Activated CD8-positive, alpha-beta T cell treated with anti-CD3 and anti-CD28 coated beads, Interleukin-2, amount 10 ng/mL, durations not matched to agents 7 days and 5 days (primary cell): ENCODE measurements at regions of chr4 and their contacts with region 1.

Region 1: DNA sequence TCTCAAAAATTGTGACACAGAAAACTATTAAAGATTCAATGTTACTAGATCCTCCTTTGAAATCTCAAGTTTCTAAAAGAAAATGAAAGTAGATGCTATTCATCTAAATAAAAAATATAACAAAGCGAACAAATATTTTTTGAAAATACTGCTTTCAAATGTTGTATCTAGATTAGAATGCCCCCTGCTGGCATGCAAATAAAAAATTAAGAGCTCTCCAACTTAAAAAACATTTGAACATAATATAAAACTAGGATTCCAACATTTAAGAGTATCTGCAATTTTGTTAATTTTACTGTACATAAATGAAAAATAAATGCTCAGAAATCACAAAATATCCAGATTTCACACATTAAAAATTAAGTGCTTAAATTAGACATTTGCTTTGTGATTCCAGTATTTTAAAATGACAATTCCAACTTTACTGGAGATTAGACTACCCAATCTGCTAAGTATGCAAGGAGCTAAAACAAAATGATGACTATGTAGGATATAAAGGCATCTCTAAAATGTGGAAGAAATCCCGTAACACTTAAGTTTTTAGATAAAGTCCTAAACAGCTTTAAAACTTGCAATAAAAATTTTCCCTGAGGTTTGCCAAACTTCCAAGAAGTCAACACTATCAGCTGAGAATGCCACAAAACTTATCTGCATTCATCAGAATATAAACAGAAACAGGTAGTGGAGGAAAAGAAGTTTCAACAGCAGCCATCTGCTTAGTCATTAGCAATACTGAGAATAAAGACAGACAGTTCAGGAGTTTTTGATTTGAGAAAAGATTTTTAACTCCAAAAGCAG is 32.7 kb downstream of the DHX15 start:
- DNase-seq: no peak
- ATAC-seq: no peak
- H3K4me3 Mint-ChIP-seq: no peak overlapping the region
- H3K27ac Mint-ChIP-seq: no peak overlapping the region
- H3K4me1 Mint-ChIP-seq: peaks cover 26% of the 10 kb centered on the region
- H3K27me3 Mint-ChIP-seq: no peaks in the 10 kb centered on the region

Region 2: DNA sequence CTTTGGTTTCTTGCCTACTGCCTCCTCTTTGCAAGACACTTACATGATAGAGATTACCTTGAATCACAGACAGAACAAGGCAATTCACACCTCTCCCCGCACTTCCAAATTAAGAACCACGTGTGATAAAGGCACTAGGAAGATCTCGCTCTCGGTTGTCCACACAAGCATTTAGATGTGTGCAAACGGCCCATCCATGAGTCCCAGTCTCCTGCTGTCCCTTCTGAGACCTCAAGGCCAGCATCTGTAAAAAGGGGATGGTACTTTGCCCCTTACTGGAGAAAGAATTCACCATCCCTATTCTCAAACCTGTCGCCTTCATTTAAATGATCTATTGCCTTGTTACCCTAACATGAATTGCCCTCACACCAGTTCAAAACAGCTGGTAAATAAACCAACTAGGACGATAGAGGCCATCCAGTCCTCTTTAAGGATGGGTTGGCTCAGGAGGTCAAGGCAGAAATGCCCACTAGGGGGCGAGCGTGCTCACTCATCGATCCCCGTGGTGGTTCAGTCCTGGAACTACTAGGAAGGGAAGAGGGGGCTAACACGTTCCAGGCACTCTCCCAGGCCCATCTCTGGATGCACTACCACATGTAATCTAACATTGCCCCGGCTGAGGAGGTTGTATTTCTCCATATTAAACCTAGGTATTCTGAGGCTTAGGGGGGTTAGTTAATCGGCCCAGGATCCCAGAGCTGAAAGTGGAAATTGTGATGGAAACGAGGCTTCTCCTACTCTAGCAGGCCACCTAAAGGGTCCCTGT is 63.1 kb before region 1 on chr4:
- CTCF ChIA-PET with region 1: interaction called, 12 read pairs
- POLR2A ChIA-PET with region 1: no interaction called
- DNase-seq: peak; percentile 77
- ATAC-seq: peak; percentile 87
- H3K4me3 Mint-ChIP-seq: no peak overlapping the region
- H3K27ac Mint-ChIP-seq: no peak overlapping the region
- H3K4me1 Mint-ChIP-seq: no peaks in the 10 kb centered on the region
- H3K27me3 Mint-ChIP-seq: peaks cover 5% of the 10 kb centered on the region

Region 3: GRCh38 chr4:24537025-24537424 is 14.7 kb before region 1 on chr4:
- CTCF ChIA-PET with region 1: interaction called, 31 read pairs
- POLR2A ChIA-PET with region 1: no interaction called
- DNase-seq: no peak
- ATAC-seq: no peak
- H3K4me3 Mint-ChIP-seq: no peak overlapping the region
- H3K27ac Mint-ChIP-seq: no peak overlapping the region
- H3K4me1 Mint-ChIP-seq: peaks cover 31% of the 10 kb centered on the region
- H3K27me3 Mint-ChIP-seq: no peaks in the 10 kb centered on the region

Region 4: DNA sequence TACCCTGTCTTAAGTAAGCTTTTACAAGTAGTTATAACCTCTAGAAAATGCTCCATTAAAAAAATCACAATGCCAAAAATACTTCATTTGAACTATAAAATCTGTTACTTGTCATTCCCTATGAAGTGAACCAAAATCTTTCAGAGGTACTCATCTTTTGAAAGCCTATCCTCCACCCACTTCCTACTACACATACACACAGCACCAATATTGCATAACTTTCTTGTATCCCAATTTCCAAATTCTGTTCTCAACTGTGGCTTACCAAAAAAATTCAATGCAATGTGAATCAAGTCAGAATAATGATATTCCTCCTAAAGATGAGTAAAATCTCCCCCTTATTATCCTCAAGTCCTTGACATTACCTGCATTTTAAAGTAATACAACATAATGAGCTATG is 16.7 kb after region 1 on chr4:
- CTCF ChIA-PET with region 1: interaction called, 13 read pairs
- POLR2A ChIA-PET with region 1: interaction called, 3 read pairs
- DNase-seq: no peak
- ATAC-seq: no peak
- H3K4me3 Mint-ChIP-seq: no peak overlapping the region
- H3K27ac Mint-ChIP-seq: no peak overlapping the region
- H3K4me1 Mint-ChIP-seq: peaks cover 49% of the 10 kb centered on the region
- H3K27me3 Mint-ChIP-seq: no peaks in the 10 kb centered on the region